GM13976 (cell line): ENCODE measurements at regions of chr7 and their contacts with region 1.

Region 1: GRCh38 chr7:137656227-137656849 is 190.4 kb downstream of the DGKI start:
- DNase-seq: peak; percentile 74
- CTCF ChIP-seq: peak; percentile 68

Region 2: GRCh38 chr7:137343281-137343841 is 313.0 kb before region 1 on chr7 and contains the start of gene PTN:
- in situ Hi-C with region 1: no loop called
- DNase-seq: no peak
- CTCF ChIP-seq: no peak

Region 3: DNA sequence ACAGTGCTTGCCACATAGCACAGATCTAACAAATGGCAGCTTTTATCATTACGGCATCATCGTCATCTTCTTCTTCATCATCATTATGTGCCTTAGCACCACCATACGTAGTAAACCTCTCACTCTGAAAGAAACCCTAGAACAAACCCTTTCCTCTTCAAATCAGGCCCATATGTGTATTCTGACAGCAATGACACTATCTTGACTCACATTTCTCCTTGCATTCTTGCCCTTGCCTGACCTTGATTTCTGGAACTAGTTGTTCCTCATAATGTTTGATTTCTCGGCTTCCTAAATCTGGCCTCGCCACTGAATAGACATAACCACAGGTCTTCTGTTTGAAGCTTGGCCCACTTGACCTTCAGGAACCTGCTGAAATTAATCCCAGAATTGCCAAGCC is 75.1 kb after region 1 on chr7:
- in situ Hi-C with region 1: no loop called
- DNase-seq: no peak
- CTCF ChIP-seq: no peak

Region 4: DNA sequence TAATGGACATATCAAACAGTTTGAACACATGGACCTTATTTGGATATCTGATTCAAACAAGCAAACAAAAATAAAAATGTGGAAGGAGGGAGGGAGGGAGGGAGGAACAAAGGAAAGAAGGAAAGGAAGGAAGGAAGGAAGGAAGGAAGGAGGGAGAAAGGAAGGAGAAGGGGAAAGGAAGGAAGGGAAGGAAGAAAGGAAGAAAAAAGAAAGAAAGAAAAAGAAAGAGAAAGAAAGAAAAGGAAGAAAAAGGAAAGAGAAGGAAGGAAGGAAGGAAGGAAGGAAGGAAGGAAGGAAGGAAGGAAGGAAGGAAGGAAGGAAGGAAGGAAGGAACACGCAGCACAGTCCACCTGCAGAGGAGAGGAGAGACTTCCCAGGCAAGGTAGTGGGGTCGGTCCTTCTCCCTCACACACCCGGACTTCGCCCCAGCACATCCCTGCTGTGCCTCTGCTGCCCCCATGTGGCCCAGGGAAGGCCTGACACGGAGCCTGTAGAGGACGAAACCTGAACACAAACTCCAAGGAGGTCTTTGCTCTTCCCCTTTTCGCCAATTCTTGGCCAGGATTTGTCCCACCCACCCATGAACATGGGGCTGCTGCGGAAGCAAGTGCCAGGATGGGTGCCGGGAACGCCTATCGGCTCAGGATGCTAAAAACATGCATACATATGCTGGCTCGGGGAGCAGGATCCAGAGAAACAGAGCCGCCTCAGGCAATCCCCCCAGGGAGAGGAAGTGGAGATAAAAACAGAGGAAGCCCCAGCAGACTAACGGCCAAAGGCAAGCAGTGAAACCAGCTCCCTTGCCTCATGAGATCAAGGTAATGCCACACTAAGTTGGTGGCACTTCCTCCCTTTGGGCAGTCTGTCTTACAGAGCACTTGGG is 242.7 kb after region 1 on chr7:
- in situ Hi-C with region 1: loop called (anchors 5 kb)
- DNase-seq: peak; percentile 74
- CTCF ChIP-seq: peak; percentile 95

Region 5: DNA sequence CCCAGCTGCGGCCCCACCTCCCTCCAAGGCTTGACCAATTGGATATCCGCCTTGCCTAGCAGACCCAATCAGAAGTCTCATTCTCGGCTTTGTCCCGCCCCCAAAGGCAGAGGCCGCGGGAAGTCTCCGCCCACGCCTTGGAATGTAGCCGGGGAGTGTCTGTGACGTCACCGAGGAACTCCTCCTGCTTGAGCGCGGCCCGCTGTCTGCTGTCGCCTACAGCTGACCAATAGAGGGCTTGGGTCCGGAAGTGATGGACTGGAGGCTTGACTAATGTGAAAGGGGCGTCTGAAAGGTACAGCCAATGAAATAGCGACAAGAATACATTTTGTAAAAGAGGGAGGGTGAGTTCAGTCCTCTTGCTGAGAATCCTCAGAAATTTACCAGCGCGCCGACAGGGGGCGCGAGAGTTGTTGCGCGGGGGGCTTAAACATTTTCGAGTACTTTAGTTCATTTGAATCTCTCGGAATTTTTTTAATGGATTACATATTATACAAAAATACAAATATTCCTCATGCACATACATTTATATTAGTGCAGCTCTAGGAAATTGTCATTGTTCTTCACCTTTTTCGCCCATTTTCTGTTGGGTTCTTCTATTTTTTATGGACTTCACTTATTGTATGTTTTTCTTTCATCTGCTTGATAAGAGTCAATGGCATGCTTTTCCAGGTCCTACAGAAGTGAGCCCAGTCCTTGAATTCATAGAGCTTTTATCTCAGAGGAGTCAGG is 345.9 kb after region 1 on chr7:
- in situ Hi-C with region 1: loop called (anchors 10 kb)
- DNase-seq: peak; percentile 94
- CTCF ChIP-seq: peak; percentile 78